OCI-LY7 (cell line): ENCODE measurements at regions of chr1 and their contacts with region 1.

Region 1: GRCh38 chr1:24502709-24503058 is at the start of gene RCAN3:
- DNase-seq: peak; percentile 94
- H3K4me3 ChIP-seq: peak within 1 kb of the TSS; percentile 84
- H3K27ac ChIP-seq: peak within 1 kb of the TSS; percentile 72
- H3K4me1 ChIP-seq: peaks cover 59% of the 10 kb centered on the region
- CTCF ChIP-seq: no peak
- total RNA-seq, gene RCAN3: 13.0 and 22.9 TPM in 2 replicates

Region 2: DNA sequence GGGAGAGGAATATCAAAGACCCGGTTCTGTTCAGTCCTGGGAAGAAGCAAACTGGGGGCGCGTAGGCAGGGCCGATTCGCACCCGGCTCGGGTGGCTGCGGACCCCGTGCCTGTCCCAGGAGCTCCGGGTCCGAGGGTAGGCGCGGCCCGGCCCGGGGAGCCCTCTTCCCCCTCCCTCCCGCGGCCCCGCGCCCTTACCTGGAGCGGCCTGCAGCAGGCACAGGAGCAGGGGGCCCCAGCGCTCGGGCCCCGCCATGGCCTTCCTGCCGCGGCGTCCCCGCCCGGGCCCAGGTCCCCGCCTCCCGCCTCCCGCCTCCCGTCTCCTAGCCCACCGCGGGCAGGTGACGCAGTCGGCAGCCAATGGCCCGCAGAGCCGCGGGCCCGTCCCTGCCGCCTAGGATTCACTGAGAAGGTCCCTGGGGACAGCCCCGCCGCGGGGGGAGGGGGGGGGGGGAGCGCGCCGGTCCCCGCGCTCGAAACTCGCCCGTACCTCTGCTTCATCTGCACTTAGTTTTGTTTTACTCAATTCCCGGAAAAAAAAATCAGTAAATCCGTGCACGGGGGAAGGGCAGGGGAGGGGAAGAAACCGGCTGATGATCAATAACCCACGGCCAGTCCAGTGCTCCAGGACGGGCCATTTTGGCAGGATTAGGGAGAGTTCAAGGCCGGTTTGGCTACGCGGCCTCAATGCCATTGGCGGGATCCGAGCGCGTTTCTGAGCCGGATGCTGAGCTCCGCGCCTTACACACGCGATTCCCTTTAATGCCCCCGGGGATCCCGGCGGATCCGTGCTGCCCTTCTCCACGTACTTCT is 315.5 kb before region 1 on chr1 and contains the start of gene IFNLR1:
- CTCF ChIA-PET with region 1: no interaction called
- POLR2A ChIA-PET with region 1: interaction called, 3 read pairs
- intact Hi-C with region 1: loop called (anchors 5 kb)
- DNase-seq: peak; percentile 91
- H3K4me3 ChIP-seq: peak within 1 kb of the TSS; percentile 97
- H3K27ac ChIP-seq: peak within 1 kb of the TSS; percentile 100
- H3K4me1 ChIP-seq: peaks cover 81% of the 10 kb centered on the region
- CTCF ChIP-seq: no peak
- total RNA-seq, gene IFNLR1: 24.6 and 29.4 TPM in 2 replicates

Region 3: DNA sequence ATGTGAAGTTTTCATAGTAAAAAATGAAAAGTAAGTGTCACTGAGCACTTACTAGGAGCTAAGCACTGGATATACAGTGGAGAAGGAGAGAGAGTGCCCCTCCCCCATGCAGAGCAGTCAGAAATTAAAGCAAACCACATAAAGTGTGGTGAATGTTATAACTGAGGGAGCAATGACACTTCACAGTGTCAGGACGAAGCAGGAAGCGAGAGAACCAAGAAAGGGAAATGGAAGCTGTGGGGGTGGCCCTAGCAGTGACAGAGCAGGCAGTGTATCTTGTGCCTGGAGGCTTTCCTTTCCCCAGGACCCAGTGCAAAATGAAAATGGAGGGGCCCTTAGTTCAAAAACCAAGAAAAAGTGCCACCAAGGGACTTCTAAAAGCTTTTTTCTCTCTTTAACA is 21.6 kb before region 1 on chr1:
- CTCF ChIA-PET with region 1: interaction called, 3 read pairs
- POLR2A ChIA-PET with region 1: interaction called, 29 read pairs
- intact Hi-C with region 1: loop called (anchors 2 kb)
- DNase-seq: peak; percentile 80
- H3K4me3 ChIP-seq: peak overlapping the region; percentile 25
- H3K27ac ChIP-seq: peak overlapping the region; percentile 60
- H3K4me1 ChIP-seq: peaks cover 25% of the 10 kb centered on the region
- CTCF ChIP-seq: no peak

Region 4: GRCh38 chr1:24526940-24527542 is 24.4 kb after region 1 on chr1:
- CTCF ChIA-PET with region 1: interaction called, 3 read pairs
- POLR2A ChIA-PET with region 1: interaction called, 12 read pairs
- intact Hi-C with region 1: no loop called
- DNase-seq: peak; percentile 57
- H3K4me3 ChIP-seq: no peak overlapping the region
- H3K27ac ChIP-seq: no peak overlapping the region
- H3K4me1 ChIP-seq: peaks cover 62% of the 10 kb centered on the region
- CTCF ChIP-seq: peak; percentile 93

Region 5: GRCh38 chr1:24586970-24587820 is 84.5 kb after region 1 on chr1:
- CTCF ChIA-PET with region 1: interaction called, 3 read pairs
- POLR2A ChIA-PET with region 1: interaction called, 8 read pairs
- intact Hi-C with region 1: loop called (anchors 5 kb)
- DNase-seq: peak; percentile 88
- H3K4me3 ChIP-seq: no peak overlapping the region
- H3K27ac ChIP-seq: no peak overlapping the region
- H3K4me1 ChIP-seq: peaks cover 11% of the 10 kb centered on the region
- CTCF ChIP-seq: peak; percentile 91